ENCODE measurements at regions of chr1 and their contacts with region 1.

Region 1: GRCh38 chr1:85313888-85314696 is 37.7 kb upstream of the BCL10 start:
- DNase-seq: peak; percentile 80
- H3K4me3 ChIP-seq: no peak overlapping the region
- H3K27ac ChIP-seq: peak overlapping the region; percentile 27
- H3K4me1 ChIP-seq: peaks cover 35% of the 10 kb centered on the region
- H3K27me3 ChIP-seq: no peaks in the 10 kb centered on the region
- CTCF ChIP-seq: no peak

Region 2: DNA sequence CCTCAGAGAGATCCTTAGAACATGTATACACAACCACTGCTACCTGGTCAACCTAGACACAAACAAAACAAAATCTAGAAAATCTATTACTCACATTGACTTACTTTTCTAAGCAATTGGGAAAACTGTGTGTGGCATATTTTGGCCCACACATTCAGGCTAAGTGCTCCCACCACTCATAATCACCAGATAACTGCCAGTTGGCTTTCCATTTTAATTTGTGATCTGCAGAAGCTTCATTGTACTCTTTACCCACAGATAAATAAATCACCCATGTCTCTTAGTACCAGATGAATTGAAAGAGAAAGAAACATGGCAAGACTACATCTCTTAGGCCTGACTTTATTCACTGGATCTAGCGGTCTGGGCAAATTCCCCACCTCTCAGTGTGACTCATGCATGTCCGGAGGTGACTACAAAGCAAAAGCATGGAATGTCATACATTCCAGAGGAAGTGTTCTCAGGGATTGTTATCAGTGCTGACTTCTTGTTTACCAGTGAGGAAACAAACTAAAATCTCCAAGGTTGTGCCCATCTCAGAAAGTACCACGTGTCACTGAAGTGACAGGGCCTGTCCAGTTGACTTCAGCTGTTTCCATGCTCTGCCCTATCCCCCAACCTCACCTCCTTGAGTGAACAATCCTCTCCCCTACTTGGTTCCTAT is 14.8 kb after region 1 on chr1:
- CTCF ChIA-PET with region 1: interaction called, 3 read pairs
- dilution Hi-C with region 1: no loop called
- in situ Hi-C with region 1: no loop called
- intact Hi-C with region 1: loop called (anchors 2 kb)
- DNase-seq: peak; percentile 89
- H3K4me3 ChIP-seq: no peak overlapping the region
- H3K27ac ChIP-seq: peak overlapping the region; percentile 87
- H3K4me1 ChIP-seq: peaks cover 51% of the 10 kb centered on the region
- H3K27me3 ChIP-seq: no peaks in the 10 kb centered on the region
- CTCF ChIP-seq: no peak